ENCODE measurements at regions of chr19 and their contacts with region 1.

Region 1: DNA sequence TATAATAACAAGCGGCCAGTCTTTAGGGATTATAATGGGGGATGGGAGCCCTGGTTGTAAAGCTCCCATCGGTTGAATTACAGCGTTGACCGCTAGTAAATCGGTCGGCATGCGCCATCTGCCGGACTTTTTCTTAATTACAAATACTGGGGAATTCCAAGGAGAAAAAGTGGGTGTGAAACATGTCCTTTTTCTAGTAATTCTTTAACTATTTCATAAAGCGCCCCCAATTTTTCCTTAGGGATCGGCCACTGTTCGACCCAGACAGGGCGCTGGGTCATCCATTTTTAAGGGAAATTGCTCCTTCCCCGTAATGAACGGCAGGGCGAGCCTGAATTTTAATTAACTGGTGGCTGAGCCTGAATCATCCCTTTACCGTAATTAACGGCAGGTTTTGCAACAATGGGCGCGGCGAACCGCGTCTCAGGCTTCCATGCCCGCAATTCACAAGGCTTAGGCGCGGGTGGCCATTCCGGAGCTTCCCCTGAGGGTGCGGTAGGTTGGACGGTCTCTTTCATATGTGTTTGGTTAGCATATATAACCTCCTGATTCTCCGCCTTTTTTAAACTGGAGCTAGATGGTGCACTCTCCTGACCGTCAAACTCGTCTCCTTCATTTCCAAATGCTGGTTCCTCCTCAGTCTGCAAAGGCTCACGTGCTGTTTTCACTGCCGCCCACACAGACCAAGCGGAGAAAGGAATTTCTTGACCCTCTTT is 30.2 kb upstream of the EVI5L start:
- DNase-seq: peak; percentile 56
- H3K4me3 ChIP-seq: peak overlapping the region; percentile 8 to 42 (median 22)
- H3K27ac ChIP-seq: no peak overlapping the region
- H3K4me1 ChIP-seq: peaks cover 5% of the 10 kb centered on the region
- H3K27me3 ChIP-seq: no peaks in the 10 kb centered on the region
- CTCF ChIP-seq: peak; percentile 32 to 55

Region 2: DNA sequence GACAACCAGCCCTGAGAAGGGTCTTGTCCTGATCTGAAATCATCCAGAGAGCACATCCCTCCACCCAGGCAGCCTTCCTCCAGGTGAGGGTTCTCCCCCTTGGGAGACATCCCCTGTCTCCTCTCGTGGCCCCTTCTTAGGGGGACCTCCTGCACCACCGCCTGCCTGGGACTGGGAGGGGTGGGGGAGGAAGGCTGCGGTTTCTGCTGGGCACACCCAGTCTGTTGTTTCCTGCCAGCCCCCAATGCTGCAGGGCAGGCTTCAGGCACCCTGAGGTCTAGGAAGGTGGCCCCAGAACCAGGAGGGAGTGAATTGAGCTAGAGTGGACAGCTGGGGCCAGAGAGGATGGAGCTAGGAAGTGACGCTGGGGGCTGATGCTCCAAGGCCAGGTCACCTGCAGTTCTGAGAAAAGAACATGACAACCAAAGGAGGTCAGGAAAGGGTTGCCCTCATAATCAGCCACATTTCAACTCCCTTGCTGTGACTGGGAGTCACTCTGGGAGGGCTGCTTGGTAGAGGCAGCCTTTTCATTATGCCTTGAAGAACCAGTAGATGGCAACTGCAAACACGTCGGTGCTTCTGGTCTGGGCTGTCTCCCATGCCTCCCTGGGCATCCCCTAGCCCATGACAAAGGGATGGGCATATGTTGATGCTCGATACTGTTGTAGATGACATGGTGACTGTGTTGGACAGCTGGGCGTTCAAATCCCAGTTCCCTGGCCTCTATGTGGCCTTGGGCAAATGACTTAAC is 449.7 kb before region 1 on chr19:
- CTCF ChIA-PET with region 1: no interaction called
- dilution Hi-C with region 1: no loop called
- in situ Hi-C with region 1: loop called in 1 of 2 experiments (anchors 25 kb)
- intact Hi-C with region 1: loop called (anchors 1 kb)
- DNase-seq: no peak
- H3K4me3 ChIP-seq: no peak overlapping the region
- H3K27ac ChIP-seq: no peak overlapping the region
- H3K4me1 ChIP-seq: no peaks in the 10 kb centered on the region
- H3K27me3 ChIP-seq: no peaks in the 10 kb centered on the region
- CTCF ChIP-seq: no peak

Region 3: DNA sequence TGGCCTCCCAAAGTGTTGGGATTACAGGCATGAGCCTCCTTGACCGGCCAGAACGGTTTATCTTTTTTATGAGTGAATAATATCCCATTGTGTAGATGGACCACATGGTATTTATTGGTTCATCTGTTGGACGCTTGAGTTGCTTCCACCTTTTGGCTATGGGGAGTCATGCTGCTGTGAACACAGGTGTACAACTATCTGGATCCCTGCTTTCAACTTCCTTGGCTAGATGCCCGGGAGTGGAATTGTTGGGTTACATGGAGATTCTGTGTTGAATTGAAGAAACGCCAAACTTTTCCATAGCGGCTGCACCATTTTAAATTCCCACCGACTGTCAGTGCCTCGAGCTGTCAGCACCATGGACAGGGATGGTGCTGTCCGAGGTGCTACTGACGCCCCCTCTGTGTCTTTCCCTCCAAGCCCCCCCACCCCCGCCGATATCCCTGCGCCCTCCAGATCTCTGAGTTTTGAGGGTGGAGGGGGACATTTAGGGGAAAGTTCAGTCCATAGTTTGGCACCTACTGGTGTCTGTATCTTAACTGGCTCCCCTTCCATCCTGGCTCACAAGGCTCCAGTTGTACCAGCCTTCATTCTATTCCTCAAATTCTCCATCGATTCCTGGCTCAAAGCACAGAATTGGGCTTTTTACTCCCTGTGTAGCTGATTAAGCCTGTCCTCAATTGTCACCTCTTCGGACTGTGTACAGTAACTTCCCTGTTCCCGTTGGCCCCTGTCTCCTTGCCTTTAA is 237.0 kb before region 1 on chr19:
- CTCF ChIA-PET with region 1: interaction called, 18 read pairs
- dilution Hi-C with region 1: no loop called
- in situ Hi-C with region 1: loop called in 1 of 2 experiments (anchors 10 kb)
- intact Hi-C with region 1: loop called (anchors 1 kb)
- DNase-seq: no peak
- H3K4me3 ChIP-seq: no peak overlapping the region
- H3K27ac ChIP-seq: no peak overlapping the region
- H3K4me1 ChIP-seq: no peaks in the 10 kb centered on the region
- H3K27me3 ChIP-seq: no peaks in the 10 kb centered on the region
- CTCF ChIP-seq: no peak

Region 4: GRCh38 chr19:7652061-7652641 is 147.6 kb before region 1 on chr19:
- CTCF ChIA-PET with region 1: no interaction called
- dilution Hi-C with region 1: no loop called
- in situ Hi-C with region 1: no loop called
- intact Hi-C with region 1: loop called (anchors 1 kb)
- DNase-seq: peak; percentile 57
- H3K4me3 ChIP-seq: peak overlapping the region in 1 of 3 experiments; percentile 10
- H3K27ac ChIP-seq: no peak overlapping the region
- H3K4me1 ChIP-seq: peaks cover 3% of the 10 kb centered on the region
- H3K27me3 ChIP-seq: no peaks in the 10 kb centered on the region
- CTCF ChIP-seq: peak; percentile 88 to 94

Region 5: DNA sequence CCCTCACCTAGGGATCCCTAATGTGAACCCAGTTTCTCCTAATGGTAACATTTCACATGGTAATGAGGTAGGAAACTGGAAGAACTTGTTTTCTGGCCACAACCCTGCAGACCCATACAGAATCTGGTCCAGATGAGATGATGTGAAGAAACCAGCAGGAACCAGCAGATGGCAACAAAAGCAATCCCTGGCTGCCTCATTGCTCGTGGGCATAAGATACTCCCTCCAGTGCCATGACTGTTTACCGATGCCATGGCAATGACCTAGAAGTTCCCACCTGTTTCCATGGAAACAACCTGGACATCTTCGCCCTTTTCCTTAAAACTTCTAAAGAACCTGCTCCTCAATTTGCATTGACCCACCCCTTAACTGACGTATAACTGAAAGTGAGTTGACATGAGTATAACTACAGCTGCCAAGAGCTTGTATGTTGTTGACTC is 51.0 kb before region 1 on chr19:
- CTCF ChIA-PET with region 1: no interaction called
- dilution Hi-C with region 1: no loop called
- in situ Hi-C with region 1: no loop called
- intact Hi-C with region 1: loop called (anchors 1 kb)
- DNase-seq: peak; percentile 48
- H3K4me3 ChIP-seq: no peak overlapping the region
- H3K27ac ChIP-seq: no peak overlapping the region
- H3K4me1 ChIP-seq: no peaks in the 10 kb centered on the region
- H3K27me3 ChIP-seq: no peaks in the 10 kb centered on the region
- CTCF ChIP-seq: peak; percentile 2 to 52